ENCODE measurements at regions of chr9 and their contacts with region 1.

Region 1: DNA sequence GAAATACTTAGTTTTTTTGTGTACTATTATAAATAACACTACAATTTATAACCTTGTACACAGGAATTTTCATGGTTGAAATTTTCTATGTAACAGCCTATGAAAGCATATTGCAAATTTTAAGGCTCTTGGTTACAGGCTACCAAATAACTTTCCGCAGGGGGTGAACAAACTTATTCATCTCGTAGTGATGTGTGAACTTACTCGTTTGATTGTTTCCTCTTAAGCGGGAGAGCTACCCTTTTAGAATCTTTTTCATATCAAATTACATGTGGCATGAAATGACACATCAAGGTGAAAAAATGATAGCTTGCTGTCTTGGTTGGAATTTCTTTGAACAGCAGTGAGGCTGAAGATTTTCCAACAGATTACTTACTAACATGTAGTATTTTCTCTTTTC is 90.8 kb upstream of the GNA14 start:
- DNase-seq: no peak
- H3K4me3 ChIP-seq: no peak overlapping the region
- H3K27ac ChIP-seq: no peak overlapping the region
- H3K4me1 ChIP-seq: no peaks in the 10 kb centered on the region
- H3K27me3 ChIP-seq: no peaks in the 10 kb centered on the region
- CTCF ChIP-seq: no peak

Region 2: DNA sequence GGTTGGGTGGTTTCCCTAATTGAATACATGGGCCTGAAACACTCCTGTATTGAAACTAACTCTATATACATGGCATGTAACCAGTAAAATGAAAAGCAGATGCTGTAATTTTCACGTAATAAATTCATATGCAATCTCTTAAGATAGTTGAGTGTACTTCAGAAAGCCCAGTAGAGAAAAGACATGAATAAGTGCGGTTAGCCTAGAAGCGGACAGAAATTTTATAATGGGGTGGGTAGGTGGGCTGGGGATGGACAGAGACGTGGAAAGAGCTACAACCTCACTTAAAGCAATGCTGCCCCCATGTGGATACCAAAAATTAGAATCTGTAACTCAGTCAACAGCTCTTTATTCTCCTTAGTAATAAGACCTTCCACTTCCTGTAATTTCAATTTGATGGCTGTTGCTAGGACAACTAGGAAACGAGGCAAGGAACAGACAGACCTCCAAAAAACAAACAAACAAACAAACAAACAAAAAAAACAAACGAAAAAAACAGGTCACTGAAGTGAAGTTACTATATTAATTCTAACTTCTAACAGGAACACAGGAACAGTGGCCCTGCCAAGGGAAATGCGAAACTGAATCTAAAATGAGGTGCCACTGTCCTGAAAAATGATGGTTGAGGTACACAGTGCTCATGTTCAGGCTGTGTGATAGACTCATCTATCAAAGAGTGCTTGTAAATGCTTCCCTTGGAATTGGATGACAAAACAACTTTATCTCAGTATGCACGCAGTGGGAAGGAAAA is 12.6 kb after region 1 on chr9:
- CTCF ChIA-PET with region 1: no interaction called
- POLR2A ChIA-PET with region 1: no interaction called
- intact Hi-C with region 1: no loop called
- DNase-seq: peak; percentile 28 to 38
- H3K4me3 ChIP-seq: no peak overlapping the region
- H3K27ac ChIP-seq: no peak overlapping the region
- H3K4me1 ChIP-seq: no peaks in the 10 kb centered on the region; the same call in 1 of the 2 replicates
- H3K27me3 ChIP-seq: no peaks in the 10 kb centered on the region
- CTCF ChIP-seq: peak; percentile 77

Region 3: GRCh38 chr9:77926309-77926959 is 187.5 kb after region 1 on chr9:
- CTCF ChIA-PET with region 1: no interaction called
- POLR2A ChIA-PET with region 1: no interaction called
- intact Hi-C with region 1: no loop called
- DNase-seq: peak in 1 of 2 experiments; percentile 76
- H3K4me3 ChIP-seq: no peak overlapping the region
- H3K27ac ChIP-seq: peak overlapping the region; percentile 48
- H3K4me1 ChIP-seq: peaks cover 20% of the 10 kb centered on the region
- H3K27me3 ChIP-seq: no peaks in the 10 kb centered on the region
- CTCF ChIP-seq: no peak

Region 4: GRCh38 chr9:78064075-78064474 is 325.1 kb after region 1 on chr9:
- CTCF ChIA-PET with region 1: no interaction called
- POLR2A ChIA-PET with region 1: no interaction called
- intact Hi-C with region 1: no loop called
- DNase-seq: no peak
- H3K4me3 ChIP-seq: no peak overlapping the region
- H3K27ac ChIP-seq: no peak overlapping the region
- H3K4me1 ChIP-seq: no peaks in the 10 kb centered on the region
- H3K27me3 ChIP-seq: no peaks in the 10 kb centered on the region
- CTCF ChIP-seq: no peak

Region 5: DNA sequence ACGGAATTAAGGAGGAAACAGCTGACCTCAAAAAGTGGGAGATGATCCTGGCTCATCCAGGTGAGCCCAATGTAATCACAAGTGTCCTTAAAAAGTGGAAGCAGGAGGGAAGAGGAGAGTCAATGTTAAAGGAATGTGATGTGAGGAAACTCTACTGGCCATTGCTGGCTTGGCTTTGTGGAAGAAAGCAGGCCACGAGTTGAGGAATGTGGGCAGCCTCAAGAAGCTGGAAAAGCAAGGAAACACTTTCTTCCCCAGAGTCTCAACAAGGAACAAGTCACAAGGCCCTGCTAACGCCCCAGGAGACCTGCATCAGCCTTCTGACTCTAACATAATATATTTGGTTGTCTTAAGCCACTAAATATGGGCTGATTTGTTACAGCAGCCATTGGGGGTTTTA is 810.8 kb after region 1 on chr9:
- CTCF ChIA-PET with region 1: no interaction called
- POLR2A ChIA-PET with region 1: interaction called, 25 read pairs
- intact Hi-C with region 1: no loop called
- DNase-seq: no peak
- H3K4me3 ChIP-seq: no peak overlapping the region
- H3K27ac ChIP-seq: no peak overlapping the region
- H3K4me1 ChIP-seq: no peaks in the 10 kb centered on the region
- H3K27me3 ChIP-seq: 0 out of 2 replicates have a peak, but pooled peaks cover 3% of the 10 kb centered on the region
- CTCF ChIP-seq: no peak